ENCODE measurements at regions of chr20 and their contacts with region 1.

Region 1: DNA sequence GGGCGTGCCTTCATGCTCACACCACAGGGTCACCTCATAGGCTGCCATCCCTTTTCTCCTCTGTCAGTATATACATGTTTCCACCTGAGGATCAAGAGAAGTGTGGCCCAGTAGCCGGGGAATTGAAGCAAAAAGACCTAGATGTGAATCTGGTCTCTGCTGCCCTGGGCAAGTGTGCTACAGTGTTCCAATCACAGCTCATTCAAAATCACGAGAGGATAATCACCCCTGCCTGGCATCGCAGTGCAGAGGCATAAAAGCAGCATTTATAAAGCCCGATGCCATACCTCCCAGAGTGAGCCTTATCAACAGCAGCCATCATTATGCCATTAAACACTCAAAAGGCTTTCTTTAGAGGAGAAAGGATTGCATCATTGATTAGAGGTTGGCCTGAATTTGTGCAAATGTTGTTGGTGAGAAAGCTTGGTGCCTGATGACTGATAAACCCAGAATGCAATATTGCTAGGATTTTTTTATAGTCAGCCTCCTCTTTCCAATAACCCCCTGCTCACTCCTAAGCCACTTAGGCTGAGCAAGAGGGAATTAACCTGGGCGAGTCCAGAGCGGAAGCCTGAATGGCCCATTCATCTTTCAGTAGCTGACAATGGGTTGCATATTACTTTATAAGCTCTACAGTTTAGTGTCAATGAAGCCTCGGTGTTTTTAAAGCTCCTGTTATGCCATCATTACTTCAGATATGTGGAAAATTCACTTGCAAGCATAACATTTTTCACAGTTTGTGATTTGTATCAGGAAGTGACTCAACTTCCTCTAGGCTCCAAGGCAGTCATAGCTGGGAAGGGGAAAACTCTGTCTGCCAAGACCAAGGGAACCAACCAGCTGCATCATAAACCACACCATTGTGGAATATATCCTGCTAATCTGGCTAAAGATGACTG is 92.5 kb upstream of the NXT1 start:
- DNase-seq: no peak
- ATAC-seq: peak; percentile 44

Region 2: DNA sequence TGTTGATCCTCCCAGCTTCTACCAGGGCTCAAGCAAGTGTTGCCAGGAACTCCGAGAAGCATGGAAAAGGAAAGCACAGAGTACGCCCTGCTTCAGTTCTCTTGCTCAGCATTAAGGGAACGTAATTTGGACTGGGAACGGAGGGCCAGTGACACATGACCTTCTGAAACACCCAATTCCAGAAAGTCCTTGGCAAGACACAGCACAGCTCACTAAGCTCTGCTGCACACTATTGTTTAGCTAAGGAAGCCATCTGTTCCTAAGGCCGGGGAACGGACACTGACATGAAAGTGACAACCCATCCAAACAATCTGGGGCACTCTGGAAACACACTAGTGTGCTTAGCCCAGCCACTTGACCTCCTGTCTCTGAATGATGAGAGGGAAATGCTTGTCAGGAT is 35.6 kb after region 1 on chr20:
- intact Hi-C with region 1: loop called (anchors 5 kb)
- DNase-seq: no peak
- ATAC-seq: peak; percentile 82